ENCODE measurements at regions of chr3 and their contacts with region 1.

Region 1: DNA sequence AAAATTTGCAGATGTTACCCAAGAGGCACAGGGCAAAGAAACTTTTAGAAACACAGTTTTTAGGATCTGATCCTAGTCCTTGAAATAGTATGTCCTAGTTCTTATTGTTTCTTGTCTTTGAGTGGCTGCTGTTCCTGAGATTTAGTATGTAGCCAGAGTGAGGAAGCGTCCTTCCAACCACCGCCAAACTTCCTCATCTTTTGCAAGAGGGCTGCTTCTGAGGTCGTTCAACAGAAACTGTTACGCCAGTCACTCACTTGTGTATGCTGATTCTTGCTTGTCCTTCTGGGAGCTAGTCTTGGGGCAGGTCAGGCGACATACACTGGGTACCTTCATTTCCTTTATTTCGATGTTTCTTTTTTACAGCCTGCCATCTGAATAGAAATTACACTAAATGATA is 577.3 kb upstream of the ZNF717 start:
- DNase-seq: no peak
- ATAC-seq: no peak
- H3K4me3 ChIP-seq: no peak overlapping the region
- H3K4me3 Mint-ChIP-seq: no peak overlapping the region
- H3K27ac ChIP-seq: no peak overlapping the region
- H3K27ac Mint-ChIP-seq: no peak overlapping the region
- H3K4me1 ChIP-seq: no peaks in the 10 kb centered on the region
- H3K4me1 Mint-ChIP-seq: no peaks in the 10 kb centered on the region
- H3K27me3 ChIP-seq: no peaks in the 10 kb centered on the region
- H3K27me3 Mint-ChIP-seq: no peaks in the 10 kb centered on the region
- CTCF ChIP-seq: no peak

Region 2: DNA sequence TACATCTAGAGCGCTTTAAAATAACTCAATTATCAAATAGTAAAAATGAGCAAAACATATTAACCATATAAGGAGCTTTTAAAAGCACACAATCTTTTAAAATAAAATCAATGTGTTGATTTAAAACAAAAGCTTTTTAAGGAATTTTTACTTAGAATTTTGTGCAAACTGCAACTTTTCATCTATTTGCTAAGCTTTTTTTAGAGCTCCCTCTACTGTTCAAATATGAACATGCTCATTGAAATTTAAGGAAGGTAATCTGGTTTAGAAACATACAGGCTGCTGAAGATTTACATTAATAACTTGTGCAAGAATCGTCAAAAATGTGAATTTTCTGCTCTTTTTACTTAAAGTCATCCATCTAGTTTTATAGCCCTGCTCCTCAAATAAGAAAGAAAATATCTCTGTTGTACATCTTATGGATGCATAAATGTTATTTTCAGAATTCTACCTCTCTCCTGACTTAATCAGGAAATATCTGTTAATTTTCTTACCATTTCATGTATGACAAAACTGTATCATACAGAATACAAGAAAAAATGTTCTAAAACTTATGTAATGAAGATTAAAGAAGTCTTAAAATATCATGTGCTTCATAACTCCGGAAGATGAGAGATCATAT is 207.9 kb after region 1 on chr3:
- CTCF ChIA-PET with region 1: no interaction called
- POLR2A ChIA-PET with region 1: no interaction called
- intact Hi-C with region 1: loop called in 1 of 2 experiments (anchors 5 kb)
- DNase-seq: no peak
- ATAC-seq: no peak
- H3K4me3 ChIP-seq: no peak overlapping the region
- H3K4me3 Mint-ChIP-seq: no peak overlapping the region
- H3K27ac ChIP-seq: no peak overlapping the region
- H3K27ac Mint-ChIP-seq: no peak overlapping the region
- H3K4me1 ChIP-seq: no peaks in the 10 kb centered on the region
- H3K4me1 Mint-ChIP-seq: no peaks in the 10 kb centered on the region
- H3K27me3 ChIP-seq: no peaks in the 10 kb centered on the region
- H3K27me3 Mint-ChIP-seq: no peaks in the 10 kb centered on the region
- CTCF ChIP-seq: no peak

Measured in CD4-positive, alpha-beta T cell (primary cell).